ENCODE measurements at regions of chr9 and their contacts with region 1.

Region 1: DNA sequence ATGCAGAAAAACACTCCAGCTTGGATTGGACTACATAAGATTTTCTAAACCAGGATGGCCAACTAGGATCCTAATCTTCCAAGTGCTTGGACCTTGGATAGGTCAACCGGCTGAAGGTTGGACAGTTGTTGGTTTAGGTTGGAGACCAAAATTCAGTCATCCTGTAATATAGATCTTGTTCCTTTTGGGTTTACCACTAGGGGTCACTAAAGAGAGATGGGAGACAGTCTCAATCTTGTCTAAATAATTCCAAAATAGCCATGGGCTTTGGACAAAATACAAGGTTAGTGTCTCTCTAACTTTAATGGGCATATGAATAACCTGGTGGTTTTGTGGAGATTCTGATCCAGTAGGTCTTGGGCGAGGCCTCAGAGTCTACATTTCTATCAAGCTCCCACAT is 148.7 kb upstream of the ERCC6L2 start:
- DNase-seq: no peak
- H3K4me3 ChIP-seq: no peak overlapping the region
- H3K27ac ChIP-seq: no peak overlapping the region
- H3K4me1 ChIP-seq: no peaks in the 10 kb centered on the region
- H3K27me3 ChIP-seq: no peaks in the 10 kb centered on the region
- CTCF ChIP-seq: peak; percentile 55 to 73 (median 66)

Region 2: DNA sequence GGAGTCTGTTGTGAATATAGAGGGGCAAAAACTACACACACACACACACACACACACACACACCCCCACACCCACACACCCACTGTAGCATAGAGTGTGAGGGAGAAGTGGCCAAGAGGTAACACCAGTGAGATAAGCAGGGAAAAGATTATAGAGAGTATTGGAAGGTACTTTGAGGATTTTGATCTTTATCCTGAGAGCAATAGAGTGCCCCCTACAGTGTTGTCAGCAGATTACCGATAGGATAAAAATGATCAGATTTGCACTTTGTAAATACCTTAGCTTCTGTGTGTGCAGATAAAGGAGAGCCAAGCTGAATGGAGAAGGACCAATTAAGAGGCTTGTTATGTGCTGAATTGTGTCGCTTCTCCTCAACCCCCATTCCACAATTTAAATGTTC is 181.0 kb after region 1 on chr9:
- intact Hi-C with region 1: loop called (anchors 10 kb)
- DNase-seq: no peak
- H3K4me3 ChIP-seq: no peak overlapping the region
- H3K27ac ChIP-seq: no peak overlapping the region
- H3K4me1 ChIP-seq: no peaks in the 10 kb centered on the region
- H3K27me3 ChIP-seq: no peaks in the 10 kb centered on the region
- CTCF ChIP-seq: no peak

Region 3: DNA sequence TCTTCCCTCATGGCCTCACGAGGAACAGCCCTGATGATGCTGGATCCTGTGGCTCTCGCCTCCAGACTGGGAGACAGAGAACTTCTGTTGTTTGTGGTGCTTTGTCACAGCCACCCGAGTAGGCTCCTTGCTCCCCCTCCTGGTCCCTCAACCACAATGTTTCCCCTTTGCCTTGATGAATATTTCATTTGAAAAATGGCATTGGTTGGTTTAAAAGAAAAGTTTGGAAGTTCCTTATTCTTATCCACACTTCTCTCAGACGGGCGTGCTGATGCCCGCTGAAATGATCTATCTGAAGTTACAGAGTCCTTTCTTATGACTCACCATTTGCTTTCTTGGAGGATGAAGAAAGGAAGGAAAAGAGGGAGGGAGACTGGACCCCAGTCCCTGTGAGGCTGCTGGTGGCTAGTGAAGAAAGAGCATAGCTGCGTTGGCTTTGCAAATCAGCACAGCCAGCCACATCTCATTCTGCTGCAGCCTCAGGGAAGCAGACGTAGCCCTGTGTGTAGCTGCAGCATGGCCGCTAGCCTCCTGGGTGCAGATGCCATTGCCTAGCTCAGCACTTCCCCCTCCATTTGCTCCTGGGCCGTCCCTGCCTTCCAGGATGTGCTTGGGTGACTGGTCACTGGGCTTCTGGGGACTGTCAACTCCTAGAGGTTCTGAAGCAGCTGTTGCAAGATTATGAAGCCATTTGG is 334.7 kb after region 1 on chr9:
- intact Hi-C with region 1: loop called (anchors 5 kb)
- DNase-seq: peak in 1 of 2 donors; percentile 76
- H3K4me3 ChIP-seq: no peak overlapping the region
- H3K27ac ChIP-seq: peak overlapping the region; percentile 22 to 44
- H3K4me1 ChIP-seq: peaks cover 0 to 9% of the 10 kb centered on the region in 2 donors
- H3K27me3 ChIP-seq: no peaks in the 10 kb centered on the region
- CTCF ChIP-seq: peak; percentile 36 to 54 (median 37)

Region 4: GRCh38 chr9:96217754-96218693 is 491.3 kb after region 1 on chr9:
- intact Hi-C with region 1: loop called (anchors 1 kb)
- DNase-seq: peak in 1 of 2 donors; percentile 72
- H3K4me3 ChIP-seq: peak overlapping the region; percentile 40 to 57
- H3K27ac ChIP-seq: peak overlapping the region; percentile 10 to 32
- H3K4me1 ChIP-seq: peaks cover 0 to 16% of the 10 kb centered on the region in 2 donors
- H3K27me3 ChIP-seq: no peaks in the 10 kb centered on the region
- CTCF ChIP-seq: peak; percentile 90 to 98 (median 96)

Measured in ascending aorta (tissue), 2 donors.